HCT116 (cell line): ENCODE measurements at regions of chr7 and their contacts with region 1.

Region 1: DNA sequence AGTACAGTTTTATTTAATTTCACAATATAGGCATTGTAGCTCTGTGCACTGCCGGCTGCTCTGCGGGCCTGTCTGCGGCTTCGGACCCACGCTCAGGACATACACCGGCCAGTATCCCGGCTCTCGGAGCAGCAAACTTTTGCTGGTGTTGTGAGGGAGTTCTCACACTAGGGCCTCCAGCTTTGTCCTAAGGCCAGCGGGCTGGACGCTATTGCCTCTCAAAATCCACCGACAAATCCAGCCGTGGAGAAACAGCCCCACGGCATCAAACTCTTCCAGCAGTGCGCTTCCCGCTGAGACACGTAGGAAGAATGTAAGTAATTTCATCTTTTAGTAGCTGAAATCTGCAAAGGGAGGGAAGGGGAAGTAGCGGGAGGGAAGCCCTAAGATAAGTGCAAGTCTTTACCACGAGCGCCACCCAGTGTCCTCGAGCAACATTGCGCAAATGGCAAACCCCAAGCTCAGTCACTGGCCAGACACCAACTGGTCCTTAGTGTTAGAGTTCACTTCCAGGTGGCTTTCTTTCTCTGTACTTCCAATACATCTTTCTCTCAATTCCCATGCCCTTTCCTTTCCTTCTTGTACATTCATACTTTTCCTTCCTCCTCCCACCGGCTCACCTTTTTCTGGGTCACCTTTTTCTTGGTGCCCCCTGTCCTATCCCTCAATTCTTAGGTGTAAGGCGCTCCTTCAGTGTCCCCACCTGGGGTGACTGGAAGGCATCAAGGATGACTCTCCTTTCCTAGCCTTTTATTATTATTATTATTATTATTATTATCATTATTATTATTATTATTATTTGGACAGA is 3.0 kb upstream of the DLX5 start:
- DNase-seq: peak; percentile 38
- ATAC-seq: peak; percentile 96
- H3K4me3 ChIP-seq: no peak overlapping the region
- H3K27ac ChIP-seq: no peak overlapping the region
- H3K4me1 ChIP-seq: no peaks in the 10 kb centered on the region
- H3K27me3 ChIP-seq: peaks cover 34% of the 10 kb centered on the region
- CTCF ChIP-seq: peak; percentile 51 to 87 (median 86); a peak in 5 of 6 replicates
- POLR2A ChIP-seq: no peak
- RAD21 ChIP-seq: peak; percentile 88

Region 2: GRCh38 chr7:95916573-95917297 is 1110.9 kb before region 1 on chr7:
- CTCF ChIA-PET with region 1: interaction called, 9 read pairs
- POLR2A ChIA-PET with region 1: no interaction called
- RAD21 ChIA-PET with region 1: interaction called in 1 of 2 experiments, 3 read pairs
- intact Hi-C with region 1: loop called (anchors 1 kb)
- DNase-seq: peak; percentile 59
- ATAC-seq: peak; percentile 90
- H3K4me3 ChIP-seq: no peak overlapping the region
- H3K27ac ChIP-seq: no peak overlapping the region
- H3K4me1 ChIP-seq: no peaks in the 10 kb centered on the region
- H3K27me3 ChIP-seq: peaks cover 58% of the 10 kb centered on the region
- CTCF ChIP-seq: peak; percentile 64 to 96 (median 81); a peak in 5 of 6 replicates
- POLR2A ChIP-seq: no peak
- RAD21 ChIP-seq: peak; percentile 83

Region 3: DNA sequence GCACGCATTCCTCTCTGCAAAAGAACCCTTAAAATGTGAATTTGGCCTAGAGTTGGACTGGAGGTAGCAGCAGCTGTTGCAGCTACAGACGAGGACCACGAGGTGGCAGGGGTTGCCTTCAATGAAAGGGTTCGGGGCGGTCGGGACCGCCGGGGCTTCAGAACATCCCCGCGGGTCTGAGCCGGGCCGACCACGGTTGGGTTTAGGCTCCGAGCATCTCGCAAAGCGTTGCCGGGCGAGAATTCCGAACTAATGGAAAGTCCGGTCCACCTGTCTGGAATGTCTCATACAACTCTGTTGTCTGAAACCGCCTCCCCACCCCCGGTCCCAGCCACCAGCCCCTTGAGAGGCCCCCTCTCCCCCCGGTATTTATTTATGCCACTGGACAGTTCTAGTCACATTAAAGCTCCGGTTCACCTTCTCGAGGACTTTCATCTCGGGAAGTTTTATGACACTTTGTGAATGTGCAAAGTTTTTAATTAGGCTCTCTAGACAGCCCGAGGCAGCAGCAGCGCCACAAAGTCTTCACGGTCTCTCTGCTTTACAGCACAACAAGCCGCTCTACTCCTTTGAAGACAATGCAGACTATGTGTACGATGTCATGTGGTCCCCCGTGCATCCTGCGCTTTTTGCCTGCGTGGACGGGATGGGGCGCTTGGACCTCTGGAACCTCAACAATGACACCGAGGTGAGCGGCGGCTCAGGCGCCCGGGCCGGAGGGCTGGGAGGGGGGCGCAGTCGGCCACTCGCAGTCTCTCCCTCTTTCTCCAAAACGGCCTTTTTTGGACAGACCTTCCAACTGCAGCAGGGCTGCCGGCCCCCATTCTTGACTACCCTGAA is 951.9 kb before region 1 on chr7:
- CTCF ChIA-PET with region 1: interaction called, 8 read pairs
- POLR2A ChIA-PET with region 1: no interaction called
- RAD21 ChIA-PET with region 1: interaction called, 3 to 4 read pairs
- intact Hi-C with region 1: loop called (anchors 1 kb)
- DNase-seq: peak; percentile 8
- ATAC-seq: peak; percentile 97
- H3K4me3 ChIP-seq: no peak overlapping the region
- H3K27ac ChIP-seq: no peak overlapping the region
- H3K4me1 ChIP-seq: 0 out of 4 replicates have a peak, but pooled peaks cover 0 to 4% of the 10 kb centered on the region in 2 experiments
- H3K27me3 ChIP-seq: peaks cover 68% of the 10 kb centered on the region
- CTCF ChIP-seq: peak; percentile 43 to 82 (median 76); a peak in 5 of 6 replicates
- POLR2A ChIP-seq: no peak
- RAD21 ChIP-seq: peak; percentile 80

Region 4: DNA sequence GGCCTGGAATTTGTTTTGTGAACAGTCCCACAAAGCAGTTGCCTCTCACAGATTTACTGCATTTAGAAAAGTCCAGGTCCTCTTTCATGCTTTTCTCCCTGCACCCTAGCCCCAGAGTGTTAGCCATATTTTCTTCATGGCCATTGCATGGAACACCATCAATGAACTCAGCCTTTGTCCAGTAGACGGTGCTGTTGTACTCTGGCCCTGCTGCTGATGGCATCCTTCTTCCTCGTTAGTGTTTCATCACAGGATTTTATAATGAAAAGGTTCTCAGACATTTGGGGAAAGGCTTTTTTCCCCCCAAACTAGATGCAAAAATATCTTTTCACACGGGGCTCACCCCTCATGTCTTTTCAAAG is 612.7 kb before region 1 on chr7:
- CTCF ChIA-PET with region 1: interaction called, 3 read pairs
- POLR2A ChIA-PET with region 1: no interaction called
- RAD21 ChIA-PET with region 1: no interaction called
- intact Hi-C with region 1: loop called (anchors 1 kb)
- DNase-seq: peak; percentile 13
- ATAC-seq: peak; percentile 83
- H3K4me3 ChIP-seq: no peak overlapping the region
- H3K27ac ChIP-seq: no peak overlapping the region
- H3K4me1 ChIP-seq: no peaks in the 10 kb centered on the region
- H3K27me3 ChIP-seq: peaks cover 19% of the 10 kb centered on the region
- CTCF ChIP-seq: peak; percentile 44 to 87 (median 75); a peak in 5 of 6 replicates
- POLR2A ChIP-seq: no peak
- RAD21 ChIP-seq: peak; percentile 73

Region 5: GRCh38 chr7:97064967-97065587 is 37.4 kb after region 1 on chr7:
- CTCF ChIA-PET with region 1: no interaction called
- POLR2A ChIA-PET with region 1: no interaction called
- RAD21 ChIA-PET with region 1: no interaction called
- intact Hi-C with region 1: no loop called
- DNase-seq: peak; percentile 34
- ATAC-seq: peak; percentile 90
- H3K4me3 ChIP-seq: no peak overlapping the region
- H3K27ac ChIP-seq: no peak overlapping the region
- H3K4me1 ChIP-seq: no peaks in the 10 kb centered on the region
- H3K27me3 ChIP-seq: peaks cover 3% of the 10 kb centered on the region; the same call in 1 of the 2 replicates
- CTCF ChIP-seq: peak in 2 of 3 experiments; percentile 73 to 76; a peak in 4 of 6 replicates
- POLR2A ChIP-seq: no peak
- RAD21 ChIP-seq: peak; percentile 45